ENCODE measurements at regions of chr6 and their contacts with region 1.

Region 1: DNA sequence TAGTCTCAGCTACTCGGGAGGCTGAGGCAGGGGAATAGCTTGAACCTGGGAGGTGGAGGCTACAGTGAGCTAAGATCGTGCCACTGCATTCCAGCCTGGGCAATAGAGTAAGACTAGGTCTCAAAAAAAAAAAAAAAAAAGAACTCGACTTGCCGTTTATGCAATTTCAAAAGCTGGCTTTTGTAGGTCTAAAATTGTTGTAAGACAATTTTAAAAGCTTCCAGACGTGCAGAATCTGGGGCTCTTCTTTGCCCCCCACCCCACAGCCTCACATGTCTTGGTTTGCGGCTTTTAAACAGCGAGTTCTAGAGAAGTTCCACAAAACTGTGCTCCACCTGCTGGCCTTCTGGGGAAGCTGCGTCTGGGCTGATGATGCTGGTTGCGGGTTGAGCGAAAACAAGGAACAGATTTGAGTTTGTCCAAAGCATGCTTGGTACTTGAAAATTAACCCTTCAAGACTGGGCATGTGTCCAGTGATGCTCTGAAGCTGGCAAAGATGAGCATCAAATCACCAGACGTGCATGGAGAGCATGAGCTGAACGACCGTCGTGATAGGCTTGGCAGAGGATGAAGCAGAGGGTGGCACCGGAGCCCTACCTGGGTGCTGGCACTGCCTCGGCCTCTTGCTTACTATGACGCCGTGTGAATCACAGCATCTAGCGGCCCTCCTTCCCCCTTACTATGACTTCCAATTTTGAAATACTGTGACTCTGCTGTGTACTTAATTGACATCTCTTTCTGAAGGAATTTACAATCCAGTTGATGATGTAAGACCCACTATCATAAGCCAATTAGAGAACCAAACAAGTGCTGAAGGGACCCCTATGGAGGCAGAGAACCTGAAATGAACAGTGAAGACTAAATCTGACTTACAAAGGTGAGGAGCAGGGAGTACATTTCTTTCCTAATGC is 171.4 kb downstream of the GMPR start:
- DNase-seq: peak; percentile 74
- H3K4me3 ChIP-seq: no peak overlapping the region
- H3K27ac ChIP-seq: no peak overlapping the region
- H3K4me1 ChIP-seq: peaks cover 11 to 58% (median 20%) of the 10 kb centered on the region in 4 donors
- H3K27me3 ChIP-seq: no peaks in the 10 kb centered on the region
- CTCF ChIP-seq: peak; percentile 74 to 84 (median 75)
- EP300 ChIP-seq: no peak
- POLR2A ChIP-seq: no peak

Region 2: DNA sequence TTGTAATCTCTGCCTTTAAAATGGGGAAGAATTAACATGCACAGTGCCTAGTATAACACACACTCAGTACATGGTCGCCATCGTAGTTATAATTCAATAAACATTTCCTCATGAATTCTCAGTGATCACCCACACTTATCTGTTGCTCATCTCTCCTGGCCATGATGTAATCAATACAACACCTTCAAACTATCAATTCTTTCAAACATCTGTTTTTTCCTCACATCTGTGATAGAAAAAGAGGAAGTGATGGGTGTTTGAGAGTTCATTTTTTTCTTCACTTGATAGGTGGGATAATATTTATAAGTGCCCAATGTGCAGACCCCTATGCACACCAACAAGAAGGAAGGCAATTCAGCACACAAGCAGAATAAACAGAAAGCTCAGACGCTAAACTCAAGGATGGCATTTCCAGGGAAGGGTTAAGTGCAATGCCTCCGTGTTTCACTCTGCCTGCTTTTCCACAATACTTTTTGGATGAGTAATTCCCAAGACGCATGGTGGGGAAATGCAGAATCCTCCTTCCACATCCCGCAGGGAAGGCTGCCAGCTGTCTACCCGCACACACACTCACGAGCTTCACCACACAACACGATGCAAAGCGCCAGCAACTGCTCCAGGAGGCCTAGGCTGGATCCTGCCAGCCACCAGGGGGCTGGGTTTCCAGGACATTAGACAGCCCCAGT is 71.1 kb before region 1 on chr6:
- in situ Hi-C with region 1: loop called in 2 of 4 experiments (anchors 10 kb)
- intact Hi-C with region 1: loop called (anchors 5 kb)
- DNase-seq: peak; percentile 62
- H3K4me3 ChIP-seq: no peak overlapping the region
- H3K27ac ChIP-seq: peak overlapping the region; percentile 38 to 73 (median 59)
- H3K4me1 ChIP-seq: peaks cover 8 to 33% (median 15%) of the 10 kb centered on the region in 4 donors
- H3K27me3 ChIP-seq: no peaks in the 10 kb centered on the region
- CTCF ChIP-seq: peak; percentile 22 to 46 (median 26)
- EP300 ChIP-seq: no peak
- POLR2A ChIP-seq: no peak

Region 3: DNA sequence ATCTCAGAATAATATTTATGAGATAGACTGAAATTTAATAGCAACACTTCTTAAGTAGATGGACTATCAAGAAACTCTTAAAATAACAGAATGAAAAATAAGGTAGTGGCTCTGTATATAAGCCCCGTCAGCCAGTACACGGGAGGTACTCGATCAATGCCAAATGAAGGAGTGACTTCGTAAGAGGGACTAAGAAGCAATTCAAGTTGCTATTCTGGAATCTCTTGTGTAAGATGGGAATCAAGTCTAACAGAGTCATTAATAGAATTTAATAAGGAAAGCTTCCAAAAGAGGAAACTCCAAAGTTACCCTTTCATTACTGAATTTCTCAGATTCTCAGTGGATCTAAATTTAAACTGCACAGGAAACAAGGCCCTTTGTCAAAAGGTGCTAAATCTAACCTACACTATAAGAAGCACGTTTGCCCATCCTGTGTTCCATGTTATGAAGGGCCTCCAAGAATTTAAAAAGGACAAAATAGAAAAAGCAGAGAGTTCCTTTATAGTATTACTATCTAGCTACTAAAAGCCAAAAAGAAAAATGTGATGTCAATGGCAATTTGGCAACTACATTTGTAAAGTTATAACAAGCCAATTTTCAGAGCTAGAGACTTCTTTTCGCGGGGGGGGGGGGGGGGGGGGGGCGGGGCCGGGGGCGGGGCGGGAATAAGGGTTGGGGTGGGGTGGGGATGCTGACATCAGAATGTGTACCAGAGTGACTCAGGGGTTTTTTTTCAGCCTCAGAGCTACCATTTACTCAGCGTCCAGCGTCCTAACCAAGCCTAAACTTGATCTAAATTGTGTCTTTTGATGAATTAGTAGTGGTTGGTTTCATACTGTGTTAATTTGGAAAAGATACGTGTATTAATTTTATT is 29.2 kb after region 1 on chr6:
- in situ Hi-C with region 1: no loop called
- intact Hi-C with region 1: no loop called
- DNase-seq: no peak
- H3K4me3 ChIP-seq: no peak overlapping the region
- H3K27ac ChIP-seq: peak overlapping the region in 1 of 4 donors; percentile 24
- H3K4me1 ChIP-seq: peaks cover 0 to 19% (median 0%) of the 10 kb centered on the region in 4 donors
- H3K27me3 ChIP-seq: no peaks in the 10 kb centered on the region
- CTCF ChIP-seq: no peak
- EP300 ChIP-seq: no peak
- POLR2A ChIP-seq: no peak

Region 4: GRCh38 chr6:16651871-16652270 is 242.1 kb after region 1 on chr6:
- in situ Hi-C with region 1: no loop called
- intact Hi-C with region 1: no loop called
- DNase-seq: no peak
- H3K4me3 ChIP-seq: no peak overlapping the region
- H3K27ac ChIP-seq: no peak overlapping the region
- H3K4me1 ChIP-seq: peaks cover 0 to 7% (median 2%) of the 10 kb centered on the region in 4 donors
- H3K27me3 ChIP-seq: no peaks in the 10 kb centered on the region
- CTCF ChIP-seq: no peak
- EP300 ChIP-seq: no peak
- POLR2A ChIP-seq: no peak